Heart left ventricle (tissue), 16 donors: ENCODE measurements at regions of chr5 and their contacts with region 1.

Region 1: GRCh38 chr5:74903165-74903787 is 37.1 kb upstream of the FAM169A start:
- DNase-seq: no peak
- ATAC-seq: peak in 3 of 4 donors; percentile 71 to 75 (median 73)
- H3K4me3 ChIP-seq: no peak overlapping the region
- H3K27ac ChIP-seq: no peak overlapping the region
- H3K4me1 ChIP-seq: no peaks in the 10 kb centered on the region
- H3K27me3 ChIP-seq: no peaks in the 10 kb centered on the region
- CTCF ChIP-seq: peak in 10 of 12 donors; percentile 22 to 49 (median 38)
- POLR2A ChIP-seq: no peak

Region 2: DNA sequence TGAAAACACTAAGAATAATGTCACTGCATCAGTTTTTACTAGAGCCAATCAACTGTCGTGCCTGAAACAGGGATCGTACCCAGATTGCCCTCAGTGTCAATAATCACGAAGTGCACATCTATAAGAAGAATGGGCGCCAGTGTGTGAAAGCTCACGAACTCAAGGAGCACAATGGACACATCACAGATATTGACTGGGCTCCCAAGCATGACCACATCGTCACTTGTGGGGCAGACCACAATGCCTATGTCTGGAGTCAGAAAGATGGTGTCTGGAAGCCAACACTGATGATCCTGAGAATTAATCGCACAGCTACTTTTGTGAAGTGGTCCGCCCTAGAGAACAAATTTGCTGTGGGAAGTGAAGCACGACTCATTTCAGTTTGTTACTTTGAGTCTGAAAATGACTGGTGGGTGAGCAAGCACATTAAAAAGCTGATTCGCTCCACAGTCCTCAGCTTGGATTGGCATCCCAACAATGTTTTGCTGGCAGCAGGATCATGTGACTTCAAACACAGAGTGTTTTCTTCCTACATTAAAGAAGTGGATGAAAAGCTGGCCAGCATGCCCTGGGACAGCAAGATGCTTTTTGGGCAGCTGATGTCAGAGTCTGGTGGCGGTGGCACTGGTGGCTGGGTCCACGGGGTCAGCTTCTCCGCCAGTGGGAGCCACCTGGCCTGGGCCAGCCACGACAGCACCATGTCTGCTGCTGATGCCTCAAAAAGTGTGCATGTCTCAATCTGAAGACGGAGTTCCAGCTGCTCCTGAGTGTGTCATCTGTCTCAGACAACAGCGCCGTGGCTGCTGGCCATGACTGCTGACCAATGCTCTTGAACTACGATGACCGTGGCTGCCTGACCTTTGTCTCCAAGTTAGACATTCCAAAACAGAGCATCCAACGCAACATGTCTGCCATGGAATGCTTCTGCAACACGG is 104.0 kb before region 1 on chr5:
- intact Hi-C with region 1: loop called in 1 of 10 experiments (anchors 10 kb)
- DNase-seq: no peak
- ATAC-seq: no peak
- H3K4me3 ChIP-seq: no peak overlapping the region
- H3K27ac ChIP-seq: no peak overlapping the region
- H3K4me1 ChIP-seq: no peaks in the 10 kb centered on the region
- H3K27me3 ChIP-seq: no peaks in the 10 kb centered on the region
- CTCF ChIP-seq: no peak
- POLR2A ChIP-seq: no peak

Region 3: DNA sequence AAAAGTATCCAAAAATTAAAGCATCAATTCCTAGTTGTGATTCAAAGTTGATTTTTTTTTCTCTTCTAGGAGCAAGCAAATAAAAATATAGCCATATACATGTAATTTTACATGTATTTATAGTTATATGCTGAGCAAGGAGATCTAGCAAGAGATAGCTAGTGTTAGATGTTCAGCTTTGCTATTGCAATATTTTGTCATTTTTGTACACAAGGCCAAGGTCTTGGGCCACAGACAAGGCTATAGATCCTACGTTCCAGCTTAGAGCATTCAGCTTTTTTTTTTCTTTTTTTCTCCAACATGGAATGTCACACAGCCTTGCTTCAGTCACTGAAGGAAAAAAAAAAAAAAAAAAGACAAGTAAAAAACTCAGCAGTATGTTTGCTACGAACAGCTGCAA is 470.6 kb after region 1 on chr5:
- intact Hi-C with region 1: no loop called
- DNase-seq: no peak
- ATAC-seq: no peak
- H3K4me3 ChIP-seq: no peak overlapping the region
- H3K27ac ChIP-seq: no peak overlapping the region
- H3K4me1 ChIP-seq: no peaks in the 10 kb centered on the region
- H3K27me3 ChIP-seq: no peaks in the 10 kb centered on the region
- CTCF ChIP-seq: no peak
- POLR2A ChIP-seq: no peak

Region 4: DNA sequence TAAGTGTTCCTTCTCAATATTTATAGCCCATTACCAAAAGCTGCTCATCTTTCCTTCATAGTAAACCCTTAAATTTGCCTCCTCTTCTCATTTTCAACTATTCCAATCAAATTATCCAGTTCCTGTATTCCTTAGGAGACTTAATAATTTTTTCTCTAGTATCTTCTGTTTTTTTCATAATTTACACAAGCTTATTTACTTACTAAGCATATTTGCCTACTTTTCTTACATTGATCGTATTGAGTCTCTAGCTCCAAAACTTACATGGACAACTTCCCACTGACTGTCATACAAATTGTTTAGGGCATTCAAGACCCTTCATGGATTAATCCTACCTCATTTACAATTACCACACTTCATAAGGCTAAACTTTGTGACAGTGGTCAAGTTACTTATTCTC is 604.6 kb after region 1 on chr5:
- intact Hi-C with region 1: no loop called
- DNase-seq: no peak
- ATAC-seq: no peak
- H3K4me3 ChIP-seq: no peak overlapping the region
- H3K27ac ChIP-seq: no peak overlapping the region
- H3K4me1 ChIP-seq: peaks cover 4 to 37% (median 24%) of the 10 kb centered on the region in 12 donors
- H3K27me3 ChIP-seq: no peaks in the 10 kb centered on the region
- CTCF ChIP-seq: no peak
- POLR2A ChIP-seq: no peak